CD14-positive monocyte (primary cell): ENCODE measurements at regions of chr22 and their contacts with region 1.

Region 1: DNA sequence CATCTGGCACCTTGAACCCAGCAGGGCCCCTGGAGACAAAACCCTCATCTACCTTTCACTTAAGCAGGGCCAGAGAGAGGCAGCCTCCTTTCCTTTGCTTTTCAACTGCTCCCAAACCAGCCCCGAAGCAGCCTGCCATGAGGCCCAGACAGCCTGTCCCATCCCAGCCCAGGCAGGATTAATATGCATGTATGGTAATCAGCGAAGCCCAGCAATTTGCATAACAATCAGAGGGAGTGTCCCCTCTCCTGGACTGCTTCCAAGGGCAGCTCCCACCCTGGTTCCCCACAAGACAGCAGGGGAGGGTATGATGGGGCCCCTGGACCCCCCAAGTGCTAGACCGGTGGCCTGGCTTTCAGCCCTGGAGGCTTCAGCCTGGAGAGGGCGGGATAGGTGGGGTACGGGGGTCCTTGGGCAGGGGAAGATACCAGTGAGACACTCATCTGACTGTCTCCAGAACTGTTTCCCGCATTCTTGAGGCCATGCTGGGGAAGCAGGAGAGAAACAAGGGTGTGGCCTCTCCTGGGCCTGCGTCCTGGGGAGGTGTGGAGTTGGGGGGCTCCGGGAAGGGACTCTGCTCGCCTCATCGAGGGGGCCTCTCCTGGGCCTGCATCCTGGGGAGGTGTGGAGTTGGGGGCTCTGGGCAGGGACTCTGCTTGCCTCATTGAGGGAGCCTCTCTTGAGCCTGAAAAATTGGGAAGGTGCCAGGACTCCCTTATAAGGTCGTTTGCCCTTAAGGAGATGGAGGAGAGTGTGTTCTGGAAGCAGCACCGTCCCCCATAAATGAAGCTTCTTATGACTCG is 93.2 kb upstream of the PRR5 start:
- DNase-seq: no peak
- H3K4me3 ChIP-seq: no peak overlapping the region
- H3K4me3 Mint-ChIP-seq: no peak overlapping the region
- H3K27ac ChIP-seq: no peak overlapping the region
- H3K27ac Mint-ChIP-seq: no peak overlapping the region
- H3K4me1 ChIP-seq: peaks cover 27 to 30% of the 10 kb centered on the region in 2 donors
- H3K4me1 Mint-ChIP-seq: peaks cover 27% of the 10 kb centered on the region
- H3K27me3 ChIP-seq: no peaks in the 10 kb centered on the region
- H3K27me3 Mint-ChIP-seq: peaks cover 5 to 12% (median 6%) of the 10 kb centered on the region in 3 donors
- CTCF ChIP-seq: no peak

Region 2: DNA sequence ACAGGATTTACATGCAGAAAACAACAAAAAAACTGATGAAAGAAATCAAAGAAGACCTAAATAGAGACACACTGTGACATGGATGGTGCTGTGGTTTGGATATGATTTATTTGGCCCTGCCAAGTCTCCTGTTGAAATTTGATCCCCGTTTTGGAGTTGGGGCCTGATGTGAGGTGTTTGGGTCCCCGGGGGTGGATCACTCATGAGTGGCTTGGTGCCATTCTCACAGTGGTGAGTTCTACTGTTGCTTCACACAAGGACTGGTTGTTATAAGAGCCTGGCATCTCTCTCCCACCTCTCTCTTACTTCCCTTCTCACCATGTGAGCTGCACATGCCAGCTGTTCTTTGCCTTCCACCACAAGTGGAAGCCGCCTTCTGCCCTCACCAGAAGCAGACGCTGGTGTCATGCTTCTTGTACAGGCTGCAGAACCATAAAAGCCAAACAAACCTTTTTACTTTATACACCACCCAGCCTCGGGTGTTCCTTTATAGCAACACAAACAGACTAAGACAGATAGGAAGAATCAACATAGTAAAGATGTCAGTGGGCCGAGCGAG is 102.9 kb before region 1 on chr22:
- intact Hi-C with region 1: loop called in 1 of 2 experiments (anchors 10 kb)
- DNase-seq: no peak
- H3K4me3 ChIP-seq: no peak overlapping the region
- H3K4me3 Mint-ChIP-seq: peak overlapping the region in 1 of 2 donors; percentile 31
- H3K27ac ChIP-seq: no peak overlapping the region
- H3K27ac Mint-ChIP-seq: no peak overlapping the region
- H3K4me1 ChIP-seq: no peaks in the 10 kb centered on the region
- H3K4me1 Mint-ChIP-seq: no peaks in the 10 kb centered on the region
- H3K27me3 ChIP-seq: peaks cover 5 to 8% of the 10 kb centered on the region in 2 donors
- H3K27me3 Mint-ChIP-seq: peaks cover 10 to 37% (median 11%) of the 10 kb centered on the region in 3 donors
- CTCF ChIP-seq: no peak

Region 3: DNA sequence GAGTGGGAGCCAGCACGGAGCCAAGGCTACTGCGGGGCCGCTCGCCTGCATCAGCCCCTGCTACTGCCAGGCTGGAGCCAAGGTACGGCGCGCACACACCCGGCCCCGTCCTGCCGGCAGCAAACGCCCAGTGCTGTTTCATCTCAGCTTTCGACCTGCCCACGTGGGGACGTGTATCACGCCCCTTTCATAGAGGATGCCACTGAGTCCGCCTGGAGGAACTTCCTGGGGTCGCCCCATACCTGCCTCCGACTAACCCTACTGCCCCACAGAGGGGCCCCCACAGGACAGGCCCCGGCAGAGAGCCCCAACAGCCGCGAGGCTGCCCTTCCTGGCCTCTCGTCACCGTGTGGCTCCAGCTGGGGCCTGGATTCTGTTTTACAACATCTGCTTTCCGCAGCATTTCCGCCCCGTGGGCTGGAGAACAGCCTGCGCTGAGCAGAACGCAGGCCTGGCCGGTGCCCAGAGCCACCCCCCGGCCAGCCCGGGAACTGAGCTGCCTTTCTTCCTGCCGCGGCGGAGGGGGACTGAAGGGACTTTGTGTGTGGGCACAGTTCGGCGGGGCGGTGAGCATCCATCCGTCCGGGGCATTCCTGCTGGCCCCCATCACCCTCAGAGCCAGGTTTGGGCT is 120.7 kb after region 1 on chr22:
- intact Hi-C with region 1: no loop called
- DNase-seq: peak; percentile 4 to 26 (median 23)
- H3K4me3 ChIP-seq: peak overlapping the region in 1 of 3 experiments; percentile 32
- H3K4me3 Mint-ChIP-seq: peak overlapping the region; percentile 27 to 76
- H3K27ac ChIP-seq: no peak overlapping the region
- H3K27ac Mint-ChIP-seq: peak overlapping the region in 2 of 7 donors; percentile 31 to 33
- H3K4me1 ChIP-seq: peaks cover 14 to 15% of the 10 kb centered on the region in 2 donors
- H3K4me1 Mint-ChIP-seq: peaks cover 10% of the 10 kb centered on the region
- H3K27me3 ChIP-seq: peaks cover 0 to 9% of the 10 kb centered on the region in 2 donors
- H3K27me3 Mint-ChIP-seq: peaks cover 5 to 22% (median 12%) of the 10 kb centered on the region in 3 donors
- CTCF ChIP-seq: no peak